GM10248 (cell line): ENCODE measurements at regions of chr17 and their contacts with region 1.

Region 1: DNA sequence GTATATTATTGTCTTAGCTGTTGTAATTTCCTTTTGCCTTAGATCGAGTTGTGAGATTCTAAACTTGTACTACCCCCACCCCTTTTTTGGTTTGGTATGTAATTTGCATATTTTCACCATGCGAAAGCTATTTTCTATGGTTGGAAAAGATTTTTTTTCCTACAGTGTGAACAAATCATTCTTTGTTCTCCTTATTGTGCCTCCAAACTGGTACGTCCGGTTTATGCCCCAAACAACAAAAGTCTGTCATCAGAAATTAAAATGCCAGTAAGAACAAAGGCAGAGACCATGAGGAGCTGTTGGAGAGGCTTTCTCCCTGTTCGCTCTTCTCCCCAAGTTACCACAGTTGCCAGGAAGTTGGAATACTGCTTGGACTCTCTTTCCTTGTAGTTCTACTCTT is 66.1 kb downstream of the BCAS3 start:
- DNase-seq: no peak
- CTCF ChIP-seq: no peak

Region 2: GRCh38 chr17:60720763-60721531 is 22.9 kb before region 1 on chr17:
- CTCF ChIA-PET with region 1: interaction called, 13 read pairs
- POLR2A ChIA-PET with region 1: no interaction called
- DNase-seq: peak; percentile 64
- CTCF ChIP-seq: peak; percentile 77

Region 3: DNA sequence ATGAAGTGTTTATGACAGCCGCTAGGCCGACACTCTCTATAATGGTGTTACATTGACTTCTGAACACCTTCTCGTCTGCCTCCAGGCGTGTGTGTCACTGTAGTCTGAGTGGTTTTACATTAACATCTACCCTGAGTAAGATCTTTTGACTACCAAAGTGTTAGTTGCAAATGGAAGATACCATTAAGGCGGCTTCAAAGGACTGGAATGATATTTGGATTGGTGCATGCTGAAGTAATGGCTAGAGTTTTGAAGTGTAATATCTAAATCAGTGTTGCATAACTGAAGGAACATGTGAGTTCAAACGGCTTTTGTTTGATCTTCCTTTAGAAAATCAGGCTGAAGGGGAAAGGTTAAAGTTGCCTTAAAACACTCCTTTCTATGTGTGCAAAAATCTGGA is 13.9 kb before region 1 on chr17:
- CTCF ChIA-PET with region 1: interaction called, 15 read pairs
- POLR2A ChIA-PET with region 1: no interaction called
- DNase-seq: no peak
- CTCF ChIP-seq: no peak

Region 4: GRCh38 chr17:60754057-60754604 is 10.3 kb after region 1 on chr17:
- CTCF ChIA-PET with region 1: no interaction called
- POLR2A ChIA-PET with region 1: no interaction called
- DNase-seq: no peak
- CTCF ChIP-seq: no peak

Region 5: DNA sequence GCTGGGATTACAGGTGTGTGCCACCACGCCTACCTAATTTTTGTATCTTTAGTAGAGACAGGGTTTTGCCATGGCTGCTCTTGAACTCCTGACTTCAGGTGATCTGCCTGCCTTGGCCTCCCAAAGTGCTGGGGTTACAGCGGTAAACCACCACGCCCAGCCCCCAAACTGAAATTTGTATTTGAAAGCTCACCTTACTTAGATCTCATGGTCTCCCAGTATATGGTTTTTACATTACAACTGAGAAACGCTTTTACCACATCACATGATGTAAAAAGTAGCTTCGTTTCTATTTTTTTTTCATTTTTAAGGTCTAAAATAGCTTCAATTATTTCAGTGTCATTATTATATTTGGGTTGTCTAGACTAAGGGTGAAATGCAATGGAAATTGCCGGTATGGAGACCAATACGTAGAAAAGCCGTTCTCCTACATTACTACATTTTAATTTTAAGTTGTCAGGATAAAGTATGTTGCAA is 27.2 kb after region 1 on chr17:
- CTCF ChIA-PET with region 1: no interaction called
- POLR2A ChIA-PET with region 1: no interaction called
- DNase-seq: no peak
- CTCF ChIP-seq: no peak